BJ (cell line): ENCODE measurements at regions of chr2 and their contacts with region 1.

Region 1: GRCh38 chr2:55232084-55232862 is at the starts of genes CLHC1 and RPS27A:
- DNase-seq: peak; percentile 81
- H3K4me3 ChIP-seq: peak within 1 kb of the TSS; percentile 83
- H3K27me3 ChIP-seq: no peaks in the 10 kb centered on the region
- CTCF ChIP-seq: no peak
- polyA plus RNA-seq, gene CLHC1: 3.8 and 8.4 TPM in 2 replicates
- polyA plus RNA-seq, gene RPS27A: 769 and 1,763 TPM in 2 replicates

Region 2: GRCh38 chr2:55887902-55888624 is 655.8 kb after region 1 on chr2:
- CTCF ChIA-PET with region 1: no interaction called
- POLR2A ChIA-PET with region 1: interaction called, 10 read pairs
- DNase-seq: no peak
- H3K4me3 ChIP-seq: no peak overlapping the region
- H3K27me3 ChIP-seq: no peaks in the 10 kb centered on the region
- CTCF ChIP-seq: no peak